MCF 10A (cell line): ENCODE measurements at regions of chr4 and their contacts with region 1.

Region 1: GRCh38 chr4:19739101-19739720 is 512.5 kb upstream of the SLIT2 start:
- DNase-seq: peak; percentile 93
- H3K4me3 Mint-ChIP-seq: peak overlapping the region; percentile 77
- H3K27ac Mint-ChIP-seq: peak overlapping the region; percentile 97
- H3K4me1 Mint-ChIP-seq: peaks cover 24% of the 10 kb centered on the region
- H3K27me3 Mint-ChIP-seq: no peaks in the 10 kb centered on the region
- CTCF ChIP-seq: no peak

Region 2: GRCh38 chr4:19776021-19776459 is 36.8 kb after region 1 on chr4:
- CTCF ChIA-PET with region 1: no interaction called
- POLR2A ChIA-PET with region 1: interaction called, 3 read pairs
- intact Hi-C with region 1: loop called (anchors 5 kb)
- DNase-seq: peak; percentile 92
- H3K4me3 Mint-ChIP-seq: peak overlapping the region; percentile 61
- H3K27ac Mint-ChIP-seq: peak overlapping the region; percentile 87
- H3K4me1 Mint-ChIP-seq: peaks cover 17% of the 10 kb centered on the region
- H3K27me3 Mint-ChIP-seq: no peaks in the 10 kb centered on the region
- CTCF ChIP-seq: no peak